Prostate gland (tissue), 2 donors: ENCODE measurements at regions of chr1 and their contacts with region 1.

Region 1: GRCh38 chr1:40404670-40405462 is 31.3 kb downstream of the SMAP2 start:
- DNase-seq: peak; percentile 38
- H3K4me3 ChIP-seq: no peak overlapping the region
- H3K27ac ChIP-seq: no peak overlapping the region
- H3K4me1 ChIP-seq: no peaks in the 10 kb centered on the region
- H3K27me3 ChIP-seq: no peaks in the 10 kb centered on the region
- CTCF ChIP-seq: peak; percentile 66 to 91 (median 84)
- POLR2A ChIP-seq: no peak

Region 2: GRCh38 chr1:40153073-40153770 is 251.6 kb before region 1 on chr1:
- intact Hi-C with region 1: loop called (anchors 2 kb)
- DNase-seq: peak; percentile 28
- H3K4me3 ChIP-seq: no peak overlapping the region
- H3K27ac ChIP-seq: no peak overlapping the region
- H3K4me1 ChIP-seq: no peaks in the 10 kb centered on the region
- H3K27me3 ChIP-seq: no peaks in the 10 kb centered on the region
- CTCF ChIP-seq: peak; percentile 37 to 62 (median 50)
- POLR2A ChIP-seq: no peak

Region 3: DNA sequence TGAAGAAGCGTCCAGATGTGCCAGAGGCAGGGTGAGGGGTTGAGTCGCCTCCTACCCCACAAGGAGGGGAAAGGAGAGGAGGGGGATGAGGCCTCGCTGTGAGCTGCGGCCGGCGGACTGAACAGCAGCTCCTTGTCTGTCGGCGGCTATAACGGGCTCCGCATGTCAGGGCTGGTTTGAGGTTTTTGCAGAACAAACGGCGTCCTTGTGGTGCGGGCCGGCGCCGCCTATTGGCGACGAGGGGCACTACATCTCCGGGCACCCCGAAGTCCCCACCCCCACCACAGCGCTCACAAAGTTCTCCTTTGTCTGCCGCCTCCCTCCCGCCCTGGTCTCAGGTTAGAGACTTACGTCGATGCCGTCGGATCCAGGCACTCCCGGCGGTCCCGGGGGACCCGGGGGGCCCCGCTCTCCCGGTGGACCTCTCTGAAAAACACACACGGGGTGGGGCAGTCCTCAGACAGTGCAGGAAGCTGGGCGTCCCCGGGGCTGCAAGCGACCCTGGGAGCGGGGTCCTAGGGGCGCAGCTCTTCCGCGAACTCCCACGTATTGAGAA is 89.5 kb before region 1 on chr1:
- intact Hi-C with region 1: loop called (anchors 10 kb)
- DNase-seq: peak; percentile 80
- H3K4me3 ChIP-seq: peak overlapping the region; percentile 28 to 37
- H3K27ac ChIP-seq: peak overlapping the region; percentile 30 to 56
- H3K4me1 ChIP-seq: no peaks in the 10 kb centered on the region
- H3K27me3 ChIP-seq: no peaks in the 10 kb centered on the region
- CTCF ChIP-seq: peak; percentile 89 to 95 (median 94)
- POLR2A ChIP-seq: no peak

Region 4: DNA sequence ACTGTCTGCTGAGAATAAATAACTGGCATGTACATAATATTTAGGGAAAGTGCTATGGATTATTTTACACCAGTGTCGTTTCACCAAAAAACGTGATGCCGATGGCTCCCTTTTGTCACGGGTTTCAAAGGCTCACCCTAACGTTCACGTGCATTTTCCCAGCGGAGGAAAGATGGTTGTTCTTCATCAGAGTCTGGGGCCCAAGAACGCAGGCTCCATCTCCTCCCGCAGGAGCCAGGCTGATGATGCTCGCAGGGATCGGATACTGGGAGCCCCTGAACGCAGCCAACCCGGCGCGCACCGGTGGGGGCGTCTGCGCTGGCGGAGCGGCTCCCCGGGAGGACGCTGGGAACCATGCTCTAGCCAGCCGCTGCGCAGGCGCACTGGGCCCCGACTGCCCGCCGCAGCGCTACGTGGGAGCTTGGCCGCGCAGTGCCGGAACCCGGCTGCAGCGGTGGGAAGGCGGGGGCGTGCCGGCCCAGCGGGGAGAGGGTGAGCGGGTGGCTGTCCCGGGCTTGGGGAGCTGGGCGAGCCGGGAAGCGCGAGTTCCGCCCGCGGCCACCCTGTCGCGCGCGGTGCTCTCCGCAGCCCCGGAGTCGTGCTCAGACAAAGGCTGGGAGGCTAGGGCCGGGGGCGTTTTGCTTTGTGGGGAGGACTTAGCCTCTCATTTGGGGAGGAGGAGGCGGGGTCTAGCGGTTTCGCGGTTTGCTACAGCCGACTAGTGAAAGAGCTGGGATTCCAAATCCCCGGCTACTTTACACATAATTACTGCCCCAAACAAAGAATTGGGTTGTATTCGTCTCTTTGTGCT is 45.0 kb after region 1 on chr1 and contains the start of gene ZFP69B:
- intact Hi-C with region 1: no loop called
- DNase-seq: peak; percentile 78
- H3K4me3 ChIP-seq: peak within 1 kb of the TSS; percentile 58 to 71
- H3K27ac ChIP-seq: peak within 1 kb of the TSS; percentile 45 to 72
- H3K4me1 ChIP-seq: no peaks in the 10 kb centered on the region
- H3K27me3 ChIP-seq: no peaks in the 10 kb centered on the region
- CTCF ChIP-seq: peak in 1 of 4 experiments; percentile 23
- POLR2A ChIP-seq: peak; percentile 55
- total RNA-seq, gene ZFP69B: 0.46 to 2.9 TPM

Region 5: GRCh38 chr1:40592107-40592803 is 187.4 kb after region 1 on chr1:
- intact Hi-C with region 1: no loop called
- DNase-seq: peak; percentile 81
- H3K4me3 ChIP-seq: no peak overlapping the region
- H3K27ac ChIP-seq: peak overlapping the region in 1 of 2 donors; percentile 55
- H3K4me1 ChIP-seq: peaks cover 4% of the 10 kb centered on the region
- H3K27me3 ChIP-seq: no peaks in the 10 kb centered on the region
- CTCF ChIP-seq: peak; percentile 30 to 77 (median 57)
- POLR2A ChIP-seq: no peak

Region 6: DNA sequence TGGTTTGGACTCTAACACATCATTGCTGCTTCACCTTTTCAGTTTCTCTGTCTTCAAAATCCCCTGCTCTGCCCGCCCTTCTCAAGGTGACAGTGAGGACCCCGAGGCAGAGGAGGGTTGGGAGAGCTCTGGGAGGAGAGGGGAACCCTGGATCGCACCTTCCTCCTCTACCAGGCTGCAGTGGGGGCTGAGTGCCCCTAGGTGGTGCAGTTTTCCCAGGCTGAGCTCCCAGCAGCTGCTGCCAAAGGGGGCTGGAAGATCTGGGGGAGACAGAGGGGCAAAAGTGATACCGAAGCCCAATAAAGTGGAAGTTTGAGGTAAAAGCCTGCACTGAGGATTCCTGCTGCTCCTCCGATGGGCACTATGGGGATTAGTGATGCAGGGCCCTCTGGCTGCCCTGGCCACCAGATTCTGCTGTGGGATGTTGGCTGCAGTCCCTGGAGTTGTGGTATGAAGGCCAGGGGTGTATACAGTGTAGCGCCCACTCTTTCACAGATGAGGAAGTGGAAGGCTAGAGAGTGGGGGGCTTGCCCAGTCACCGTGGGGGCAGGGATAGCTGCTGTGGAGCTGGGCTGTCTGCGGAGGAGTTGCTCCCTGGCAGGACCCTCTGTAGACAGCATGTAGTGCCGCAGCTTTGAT is 877.9 kb after region 1 on chr1:
- intact Hi-C with region 1: no loop called
- DNase-seq: no peak
- H3K4me3 ChIP-seq: no peak overlapping the region
- H3K27ac ChIP-seq: no peak overlapping the region
- H3K4me1 ChIP-seq: no peaks in the 10 kb centered on the region
- H3K27me3 ChIP-seq: no peaks in the 10 kb centered on the region
- CTCF ChIP-seq: peak; percentile 40 to 83 (median 64)
- POLR2A ChIP-seq: no peak